ENCODE measurements at regions of chr14 and their contacts with region 1.

Region 1: GRCh38 chr14:73644531-73645247 is at the start of gene DNAL1:
- DNase-seq: peak; percentile 94
- H3K4me3 ChIP-seq: peak within 1 kb of the TSS; percentile 83
- H3K27ac ChIP-seq: peak within 1 kb of the TSS; percentile 88
- H3K4me1 ChIP-seq: no peaks in the 10 kb centered on the region
- H3K27me3 ChIP-seq: no peaks in the 10 kb centered on the region
- CTCF ChIP-seq: no peak
- total RNA-seq, gene DNAL1: 8.1 to 8.3 TPM

Region 2: DNA sequence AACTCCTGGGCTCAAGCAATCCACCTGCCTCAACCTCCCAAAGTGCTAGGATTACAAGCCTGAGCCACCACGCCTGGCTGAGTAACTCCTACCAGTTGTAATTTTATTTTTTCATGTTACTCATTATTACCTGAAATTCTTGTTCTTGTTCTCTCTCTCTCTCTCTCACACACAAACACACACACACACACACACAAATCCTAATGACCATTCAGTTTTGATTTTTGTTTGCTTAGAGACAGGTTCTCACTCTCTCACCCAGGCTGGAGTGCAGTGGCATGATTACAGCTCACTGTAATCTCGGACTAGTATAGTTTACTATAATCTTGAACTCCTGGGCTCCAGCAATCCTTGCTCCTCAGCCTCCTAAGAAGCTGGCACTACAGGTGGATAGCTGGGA is 30.3 kb after region 1 on chr14:
- intact Hi-C with region 1: no loop called
- DNase-seq: no peak
- H3K4me3 ChIP-seq: no peak overlapping the region
- H3K27ac ChIP-seq: no peak overlapping the region
- H3K4me1 ChIP-seq: no peaks in the 10 kb centered on the region
- H3K27me3 ChIP-seq: no peaks in the 10 kb centered on the region
- CTCF ChIP-seq: no peak

Region 3: GRCh38 chr14:73713803-73714655 is 69.3 kb after region 1 on chr14 and contains the start of gene PNMA1:
- intact Hi-C with region 1: loop called (anchors 10 kb)
- DNase-seq: peak; percentile 87
- H3K4me3 ChIP-seq: peak within 1 kb of the TSS; percentile 87
- H3K27ac ChIP-seq: peak within 1 kb of the TSS; percentile 96
- H3K4me1 ChIP-seq: no peaks in the 10 kb centered on the region
- H3K27me3 ChIP-seq: no peaks in the 10 kb centered on the region
- CTCF ChIP-seq: no peak
- total RNA-seq, gene PNMA1: 13.4 to 28.3 TPM

Region 4: DNA sequence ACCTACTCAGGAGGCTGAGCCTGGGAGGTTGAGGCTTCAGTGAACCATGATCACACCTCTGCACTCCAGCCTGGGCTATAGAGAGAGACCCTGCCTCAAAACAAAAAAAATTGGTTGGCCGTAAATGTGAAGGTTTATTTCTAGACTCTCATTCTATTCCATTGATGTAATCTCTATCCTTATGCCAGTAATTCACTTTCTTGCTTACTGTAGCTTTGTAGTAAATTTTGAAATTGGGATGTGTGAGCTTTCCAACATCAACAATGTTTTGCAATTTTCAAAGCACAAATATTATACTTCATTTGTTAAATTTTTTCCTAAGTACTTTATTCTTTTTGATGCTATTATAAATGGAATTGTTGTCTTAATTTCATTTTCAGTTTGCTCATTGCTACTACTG is 464.7 kb after region 1 on chr14:
- intact Hi-C with region 1: no loop called
- DNase-seq: no peak
- H3K4me3 ChIP-seq: no peak overlapping the region
- H3K27ac ChIP-seq: no peak overlapping the region
- H3K4me1 ChIP-seq: no peaks in the 10 kb centered on the region
- H3K27me3 ChIP-seq: no peaks in the 10 kb centered on the region
- CTCF ChIP-seq: no peak